Heart right ventricle (tissue), 16 donors: ENCODE measurements at regions of chr6 and their contacts with region 1.

Region 1: DNA sequence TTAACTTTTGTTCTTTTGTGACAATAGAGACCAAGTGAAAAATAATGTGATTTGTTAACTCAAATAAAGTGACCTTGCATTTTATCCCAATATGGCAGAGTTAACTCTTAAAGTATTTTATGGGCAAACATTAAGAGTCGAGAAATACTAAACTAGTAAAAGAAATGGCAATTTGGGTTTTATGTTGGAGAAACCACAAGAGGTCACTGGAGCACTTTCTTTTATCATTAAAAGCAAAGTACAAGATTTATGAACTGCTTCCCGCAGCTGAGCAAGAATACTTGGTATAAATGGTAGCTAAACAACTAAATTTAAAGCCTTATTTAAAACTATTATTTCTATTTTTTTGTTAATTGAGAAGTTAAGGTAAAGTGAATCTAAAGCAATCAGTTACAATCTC is 33.5 kb upstream of the MCM9 start:
- DNase-seq: peak in 1 of 2 donors; percentile 5
- ATAC-seq: no peak
- H3K4me3 ChIP-seq: no peak overlapping the region
- H3K27ac ChIP-seq: no peak overlapping the region
- H3K4me1 ChIP-seq: no peaks in the 10 kb centered on the region
- H3K27me3 ChIP-seq: no peaks in the 10 kb centered on the region
- CTCF ChIP-seq: peak; percentile 17 to 67 (median 52)

Region 2: DNA sequence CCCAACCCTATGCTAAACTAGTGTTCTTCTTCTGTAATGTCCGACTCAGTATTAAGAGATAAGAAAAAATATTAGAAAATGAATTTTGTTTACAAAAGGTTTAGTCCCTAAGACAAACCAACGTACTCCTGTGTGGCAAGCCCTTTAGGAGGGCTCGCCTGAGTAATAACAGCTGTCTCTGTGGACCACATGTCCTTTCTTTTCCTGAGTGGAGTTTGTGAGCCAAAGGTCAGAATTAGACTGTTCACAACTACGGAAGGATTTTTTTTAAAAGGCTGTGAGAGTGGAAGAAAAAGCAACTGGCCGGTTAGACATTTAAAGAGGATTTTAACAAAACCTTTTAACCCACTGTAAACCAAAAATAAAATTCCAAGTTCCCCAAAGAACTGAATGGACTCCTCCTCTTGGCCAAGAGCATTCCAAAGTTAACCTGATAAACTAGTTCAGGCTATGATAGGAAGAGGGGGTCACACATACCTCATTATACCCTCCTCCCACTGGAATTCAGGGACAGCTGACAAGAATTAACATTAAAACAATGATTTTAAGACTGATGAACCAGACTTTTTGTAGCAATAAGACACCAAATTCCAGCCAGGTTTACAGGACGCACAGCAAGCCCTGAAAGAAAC is 66.5 kb after region 1 on chr6:
- intact Hi-C with region 1: loop called in 1 of 10 experiments (anchors 5 kb)
- DNase-seq: no peak
- ATAC-seq: peak in 6 of 8 donors; percentile 37 to 85 (median 64)
- H3K4me3 ChIP-seq: peak overlapping the region in 1 of 10 donors; percentile 10
- H3K27ac ChIP-seq: peak overlapping the region in 3 of 10 donors; percentile 15 to 56 (median 33)
- H3K4me1 ChIP-seq: peaks cover 0 to 21% (median 9%) of the 10 kb centered on the region in 9 donors
- H3K27me3 ChIP-seq: no peaks in the 10 kb centered on the region
- CTCF ChIP-seq: no peak

Region 3: DNA sequence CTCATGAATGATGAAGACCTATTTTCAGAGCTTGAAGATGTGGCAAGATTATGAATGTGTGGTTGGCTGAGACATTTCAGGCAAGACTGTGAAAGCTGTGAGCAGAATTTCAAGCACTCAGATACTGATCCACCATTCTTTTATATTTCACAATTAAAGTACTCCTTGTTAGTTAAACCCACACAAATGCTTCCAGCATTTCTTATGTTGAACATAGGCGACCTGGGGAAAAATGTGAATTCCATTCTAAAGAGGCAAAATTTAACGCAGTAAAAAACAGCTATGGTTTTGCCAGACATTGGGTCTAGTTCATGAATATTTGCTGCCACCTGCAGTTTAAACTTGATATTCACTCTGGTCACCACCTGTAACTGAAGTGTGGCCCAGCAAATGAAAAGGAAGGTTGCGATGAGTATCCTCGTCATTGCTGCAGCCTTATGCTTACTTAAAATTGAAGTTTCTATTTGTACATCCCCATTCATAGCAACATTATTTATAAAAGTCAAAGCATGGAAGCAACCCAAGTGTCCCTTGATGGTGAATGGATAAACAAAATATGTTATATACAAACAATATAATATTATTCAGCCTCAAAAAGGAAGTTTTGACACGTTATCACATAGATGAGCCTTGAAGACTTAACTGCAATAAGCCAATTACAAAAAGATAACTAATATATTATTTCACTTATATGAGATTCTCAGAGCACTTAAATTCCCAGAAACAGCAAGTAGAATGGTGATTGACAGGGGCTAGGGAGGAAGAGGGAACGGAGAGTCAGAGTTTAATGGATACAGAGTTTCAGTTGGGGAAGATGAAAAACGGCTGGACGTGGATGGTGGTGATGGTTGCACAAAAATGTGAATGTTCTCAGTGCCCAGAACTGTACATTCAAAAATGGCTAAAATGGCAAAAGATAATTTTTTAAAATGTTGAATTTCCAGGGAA is 142.5 kb after region 1 on chr6:
- intact Hi-C with region 1: loop called (anchors 1 to 5 kb)
- DNase-seq: peak in 1 of 2 donors; percentile 55
- ATAC-seq: peak in 7 of 8 donors; percentile 63 to 79 (median 72)
- H3K4me3 ChIP-seq: peak overlapping the region in 1 of 10 donors; percentile 1
- H3K27ac ChIP-seq: no peak overlapping the region
- H3K4me1 ChIP-seq: peaks cover 0 to 13% (median 5%) of the 10 kb centered on the region in 9 donors
- H3K27me3 ChIP-seq: peaks cover 0 to 3% (median 0%) of the 10 kb centered on the region in 7 donors
- CTCF ChIP-seq: peak; percentile 35 to 86 (median 63)

Region 4: DNA sequence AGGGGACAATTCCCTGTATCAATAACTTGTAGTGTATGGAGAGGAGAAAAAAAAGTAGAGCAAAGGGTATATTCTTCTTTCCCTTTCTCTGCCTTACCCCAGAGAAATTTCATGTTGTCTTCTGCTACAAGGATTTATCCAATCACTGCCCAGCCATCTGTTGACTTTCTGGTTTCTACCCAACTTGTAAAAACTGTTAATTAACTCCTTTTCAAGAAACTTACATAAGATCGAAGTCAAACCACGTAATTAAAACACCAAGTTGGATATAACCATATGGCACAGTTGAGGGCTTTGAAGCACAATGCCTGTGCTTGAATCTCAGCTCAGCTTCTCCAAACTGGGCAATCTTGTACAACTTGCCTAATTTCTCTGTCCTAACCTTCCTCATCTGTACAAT is 281.6 kb after region 1 on chr6:
- intact Hi-C with region 1: no loop called
- DNase-seq: no peak
- ATAC-seq: no peak
- H3K4me3 ChIP-seq: no peak overlapping the region
- H3K27ac ChIP-seq: no peak overlapping the region
- H3K4me1 ChIP-seq: no peaks in the 10 kb centered on the region
- H3K27me3 ChIP-seq: no peaks in the 10 kb centered on the region
- CTCF ChIP-seq: no peak

Region 5: DNA sequence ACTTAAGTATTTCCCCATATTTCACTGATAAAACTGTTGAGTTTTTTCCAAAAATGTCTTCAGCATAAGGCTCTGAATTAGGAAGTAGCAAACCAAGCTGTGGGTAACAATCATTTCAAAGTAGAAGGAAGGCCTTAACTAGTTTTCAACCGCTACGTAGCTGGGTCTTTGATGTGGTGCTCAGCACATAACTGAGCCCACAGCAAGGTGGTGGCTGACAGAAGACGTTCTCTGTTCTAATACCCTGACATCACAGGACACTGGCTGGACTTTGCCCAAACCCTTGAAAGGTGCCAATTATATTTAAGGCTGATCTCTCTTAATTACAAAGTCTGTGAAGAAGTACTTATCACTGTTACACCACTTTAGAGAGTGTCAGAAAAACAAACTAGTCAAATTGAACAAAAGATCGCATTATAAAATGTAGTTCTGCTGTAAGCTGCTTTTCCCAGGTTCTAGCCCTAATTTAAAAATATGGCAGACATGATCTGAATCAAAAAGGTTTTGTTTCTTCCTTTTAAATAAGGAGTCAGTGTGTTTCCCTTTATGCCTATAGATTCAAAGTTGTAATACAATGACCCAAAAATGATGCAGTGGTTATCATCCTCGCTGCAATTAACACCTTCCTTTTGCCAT is 354.4 kb after region 1 on chr6:
- intact Hi-C with region 1: no loop called
- DNase-seq: no peak
- ATAC-seq: peak in 2 of 8 donors; percentile 32 to 33
- H3K4me3 ChIP-seq: no peak overlapping the region
- H3K27ac ChIP-seq: no peak overlapping the region
- H3K4me1 ChIP-seq: peaks cover 0 to 19% (median 0%) of the 10 kb centered on the region in 9 donors
- H3K27me3 ChIP-seq: no peaks in the 10 kb centered on the region
- CTCF ChIP-seq: no peak